ENCODE measurements at regions of chr3 and their contacts with region 1.

Region 1: GRCh38 chr3:124559881-124560574 is 170.2 kb upstream of the UMPS start:
- DNase-seq: peak; percentile 65 to 83 (median 76)
- H3K4me3 ChIP-seq: no peak overlapping the region
- H3K27ac ChIP-seq: no peak overlapping the region
- H3K4me1 ChIP-seq: peaks cover 0 to 5% (median 2%) of the 10 kb centered on the region in 4 experiments
- H3K27me3 ChIP-seq: peaks cover 0 to 8% (median 4%) of the 10 kb centered on the region in 5 experiments

Region 2: GRCh38 chr3:124540550-124541211 is 19.3 kb before region 1 on chr3:
- CTCF ChIA-PET with region 1: interaction called, 12 read pairs
- POLR2A ChIA-PET with region 1: no interaction called
- DNase-seq: no peak
- H3K4me3 ChIP-seq: no peak overlapping the region
- H3K27ac ChIP-seq: no peak overlapping the region
- H3K4me1 ChIP-seq: no peaks in the 10 kb centered on the region
- H3K27me3 ChIP-seq: peaks cover 3 to 60% (median 9%) of the 10 kb centered on the region in 5 experiments

Region 3: GRCh38 chr3:124650798-124651197 is 90.8 kb after region 1 on chr3:
- CTCF ChIA-PET with region 1: interaction called, 16 read pairs
- POLR2A ChIA-PET with region 1: no interaction called
- DNase-seq: peak; percentile 30 to 69 (median 56)
- H3K4me3 ChIP-seq: peak overlapping the region in 2 of 7 experiments; percentile 0 to 6
- H3K27ac ChIP-seq: no peak overlapping the region
- H3K4me1 ChIP-seq: peaks cover 24 to 65% (median 50%) of the 10 kb centered on the region in 4 experiments
- H3K27me3 ChIP-seq: no peaks in the 10 kb centered on the region

Region 4: DNA sequence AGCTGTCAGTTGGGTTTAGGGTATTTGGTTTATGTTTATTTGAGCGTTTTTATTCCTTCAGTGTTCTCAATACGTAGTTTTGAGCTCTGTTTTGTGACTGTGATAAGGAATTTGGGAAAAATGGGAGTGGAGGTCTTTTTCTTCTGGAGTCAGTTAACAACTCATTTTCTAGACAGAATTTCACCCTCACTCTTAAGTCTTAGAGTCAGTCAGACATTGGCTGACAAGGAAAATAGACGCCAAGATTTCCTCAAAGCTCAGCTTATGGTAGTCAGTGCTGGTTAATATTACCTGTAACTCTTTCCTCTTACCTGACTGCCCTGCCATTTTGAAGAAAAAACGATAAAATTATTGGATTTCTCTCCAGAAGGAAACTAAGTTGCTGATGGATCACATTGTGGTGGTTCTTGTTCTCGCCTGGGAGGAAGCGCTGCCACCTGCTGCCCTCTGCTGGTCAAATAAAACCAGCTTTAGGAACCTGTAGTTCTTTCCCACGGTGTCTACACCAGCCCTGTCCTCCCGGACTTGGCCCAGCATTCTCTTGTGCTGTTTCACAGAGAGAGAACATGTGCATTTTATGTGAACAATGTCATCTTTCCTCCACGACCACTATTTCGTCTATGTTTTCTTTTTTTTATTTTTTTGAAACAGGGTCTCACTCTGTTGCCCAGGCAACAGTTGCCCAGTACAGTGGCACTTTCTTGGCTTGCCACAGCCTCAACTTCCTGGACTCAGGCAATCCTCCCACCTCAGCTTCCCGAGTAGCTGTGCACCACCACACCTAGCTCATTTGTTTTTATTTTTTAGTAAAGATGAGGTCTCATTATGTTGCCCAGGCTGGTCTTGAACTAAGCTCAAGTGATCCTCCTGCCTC is 128.8 kb after region 1 on chr3:
- CTCF ChIA-PET with region 1: interaction called, 194 read pairs
- POLR2A ChIA-PET with region 1: no interaction called
- DNase-seq: peak; percentile 77 to 87 (median 83)
- H3K4me3 ChIP-seq: no peak overlapping the region
- H3K27ac ChIP-seq: no peak overlapping the region
- H3K4me1 ChIP-seq: peaks cover 0 to 3% (median 2%) of the 10 kb centered on the region in 4 experiments
- H3K27me3 ChIP-seq: peaks cover 0 to 2% (median 0%) of the 10 kb centered on the region in 5 experiments

Region 5: DNA sequence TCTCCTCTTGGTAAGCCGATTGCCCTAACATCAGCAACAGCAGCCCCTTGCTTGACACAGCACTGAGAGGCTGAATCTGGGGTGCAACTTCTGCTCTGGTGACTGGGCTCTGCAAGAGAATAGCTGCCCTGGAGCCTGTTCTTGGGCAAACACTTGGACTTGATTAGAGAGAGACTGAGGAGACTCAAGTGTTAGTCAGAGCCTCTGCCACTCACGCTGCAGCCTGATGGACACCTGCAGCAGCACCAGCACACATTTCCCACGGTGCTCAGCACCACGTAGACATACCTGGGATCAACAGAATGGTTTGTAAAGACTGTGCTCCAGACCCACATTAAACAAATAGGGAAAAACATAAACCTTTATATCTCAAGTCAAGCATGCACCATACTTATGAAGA is 134.5 kb after region 1 on chr3:
- CTCF ChIA-PET with region 1: interaction called, 194 read pairs
- POLR2A ChIA-PET with region 1: no interaction called
- DNase-seq: no peak
- H3K4me3 ChIP-seq: no peak overlapping the region
- H3K27ac ChIP-seq: no peak overlapping the region
- H3K4me1 ChIP-seq: no peaks in the 10 kb centered on the region
- H3K27me3 ChIP-seq: peaks cover 0 to 2% (median 0%) of the 10 kb centered on the region in 5 experiments

Measured in common myeloid progenitor, CD34-positive (primary cell).